ENCODE measurements at regions of chr5 and their contacts with region 1.

Region 1: GRCh38 chr5:170278611-170279452 is 18.7 kb downstream of the LCP2 start:
- DNase-seq: peak; percentile 95
- H3K4me3 Mint-ChIP-seq: peak overlapping the region; percentile 74
- H3K27ac Mint-ChIP-seq: peak overlapping the region; percentile 96
- H3K4me1 Mint-ChIP-seq: peaks cover 96% of the 10 kb centered on the region
- H3K27me3 Mint-ChIP-seq: no peaks in the 10 kb centered on the region

Region 2: GRCh38 chr5:170262061-170263045 is 16.5 kb before region 1 on chr5:
- CTCF ChIA-PET with region 1: interaction called, 29 read pairs
- POLR2A ChIA-PET with region 1: interaction called, 4 read pairs
- DNase-seq: peak; percentile 70
- H3K4me3 Mint-ChIP-seq: peak overlapping the region; percentile 52
- H3K27ac Mint-ChIP-seq: peak overlapping the region; percentile 87
- H3K4me1 Mint-ChIP-seq: peaks cover 91% of the 10 kb centered on the region
- H3K27me3 Mint-ChIP-seq: no peaks in the 10 kb centered on the region

Region 3: GRCh38 chr5:170267431-170268152 is 11.2 kb before region 1 on chr5:
- CTCF ChIA-PET with region 1: interaction called, 29 read pairs
- POLR2A ChIA-PET with region 1: interaction called, 4 read pairs
- DNase-seq: peak; percentile 87
- H3K4me3 Mint-ChIP-seq: peak overlapping the region; percentile 38
- H3K27ac Mint-ChIP-seq: peak overlapping the region; percentile 84
- H3K4me1 Mint-ChIP-seq: peaks cover 95% of the 10 kb centered on the region
- H3K27me3 Mint-ChIP-seq: no peaks in the 10 kb centered on the region

Region 4: GRCh38 chr5:170293273-170293672 is 14.4 kb after region 1 on chr5:
- CTCF ChIA-PET with region 1: interaction called, 47 read pairs
- POLR2A ChIA-PET with region 1: interaction called, 14 read pairs
- DNase-seq: peak; percentile 60
- H3K4me3 Mint-ChIP-seq: peak overlapping the region; percentile 96
- H3K27ac Mint-ChIP-seq: peak overlapping the region; percentile 79
- H3K4me1 Mint-ChIP-seq: peaks cover 71% of the 10 kb centered on the region
- H3K27me3 Mint-ChIP-seq: no peaks in the 10 kb centered on the region

Region 5: GRCh38 chr5:170327168-170327567 is 48.3 kb after region 1 on chr5:
- CTCF ChIA-PET with region 1: interaction called, 10 read pairs
- POLR2A ChIA-PET with region 1: interaction called, 6 read pairs
- DNase-seq: no peak
- H3K4me3 Mint-ChIP-seq: no peak overlapping the region
- H3K27ac Mint-ChIP-seq: no peak overlapping the region
- H3K4me1 Mint-ChIP-seq: no peaks in the 10 kb centered on the region
- H3K27me3 Mint-ChIP-seq: no peaks in the 10 kb centered on the region

Region 6: GRCh38 chr5:170333161-170333910 is 54.5 kb after region 1 on chr5:
- CTCF ChIA-PET with region 1: interaction called, 40 read pairs
- POLR2A ChIA-PET with region 1: interaction called, 6 read pairs
- DNase-seq: peak; percentile 65
- H3K4me3 Mint-ChIP-seq: peak overlapping the region; percentile 66
- H3K27ac Mint-ChIP-seq: no peak overlapping the region
- H3K4me1 Mint-ChIP-seq: peaks cover 28% of the 10 kb centered on the region
- H3K27me3 Mint-ChIP-seq: no peaks in the 10 kb centered on the region

Region 7: GRCh38 chr5:170338933-170339779 is 60.3 kb after region 1 on chr5:
- CTCF ChIA-PET with region 1: interaction called, 40 read pairs
- POLR2A ChIA-PET with region 1: interaction called, 3 read pairs
- DNase-seq: peak; percentile 72
- H3K4me3 Mint-ChIP-seq: no peak overlapping the region
- H3K27ac Mint-ChIP-seq: peak overlapping the region; percentile 25
- H3K4me1 Mint-ChIP-seq: peaks cover 39% of the 10 kb centered on the region
- H3K27me3 Mint-ChIP-seq: peaks cover 2% of the 10 kb centered on the region